K562 (cell line): ENCODE measurements at regions of chr4 and their contacts with region 1.

Region 1: GRCh38 chr4:121823505-121824170 is at the start of gene CCNA2:
- DNase-seq: peak; percentile 93 to 99 (median 94)
- ATAC-seq: peak; percentile 93
- H3K4me3 ChIP-seq: peak within 1 kb of the TSS; percentile 99
- H3K27ac ChIP-seq: peak within 1 kb of the TSS; percentile 96
- H3K4me1 ChIP-seq: peaks cover 0 to 20% of the 10 kb centered on the region in 2 experiments; a peak in 4 of 5 replicates
- H3K27me3 ChIP-seq: no peaks in the 10 kb centered on the region
- CTCF ChIP-seq: peak in 1 of 3 experiments; percentile 16; a peak in 1 of 6 replicates
- EP300 ChIP-seq: peak; percentile 50; the same call in 1 of the 2 replicates
- POLR2A ChIP-seq: peak; percentile 95
- RAD21 ChIP-seq: no peak
- polyA plus RNA-seq, gene CCNA2: 37.1 to 47.8 TPM

Region 2: GRCh38 chr4:121800961-121801714 is 22.5 kb before region 1 on chr4 and contains the start of gene EXOSC9:
- CTCF ChIA-PET with region 1: no interaction called
- POLR2A ChIA-PET with region 1: interaction called, 7 read pairs
- in situ Hi-C with region 1: no loop called
- intact Hi-C with region 1: loop called (anchors 2 kb)
- DNase-seq: peak; percentile 88 to 97 (median 90)
- ATAC-seq: peak; percentile 85
- H3K4me3 ChIP-seq: peak within 1 kb of the TSS; percentile 94
- H3K27ac ChIP-seq: peak within 1 kb of the TSS; percentile 97
- H3K4me1 ChIP-seq: peaks cover 3 to 8% of the 10 kb centered on the region in 2 experiments; a peak in 1 of 5 replicates
- H3K27me3 ChIP-seq: no peaks in the 10 kb centered on the region
- CTCF ChIP-seq: no peak
- EP300 ChIP-seq: no peak
- POLR2A ChIP-seq: peak; percentile 96
- RAD21 ChIP-seq: peak in 1 of 2 experiments; percentile 17; a peak in 1 of 4 replicates
- polyA plus RNA-seq, gene EXOSC9: 157 to 166 TPM

Region 3: DNA sequence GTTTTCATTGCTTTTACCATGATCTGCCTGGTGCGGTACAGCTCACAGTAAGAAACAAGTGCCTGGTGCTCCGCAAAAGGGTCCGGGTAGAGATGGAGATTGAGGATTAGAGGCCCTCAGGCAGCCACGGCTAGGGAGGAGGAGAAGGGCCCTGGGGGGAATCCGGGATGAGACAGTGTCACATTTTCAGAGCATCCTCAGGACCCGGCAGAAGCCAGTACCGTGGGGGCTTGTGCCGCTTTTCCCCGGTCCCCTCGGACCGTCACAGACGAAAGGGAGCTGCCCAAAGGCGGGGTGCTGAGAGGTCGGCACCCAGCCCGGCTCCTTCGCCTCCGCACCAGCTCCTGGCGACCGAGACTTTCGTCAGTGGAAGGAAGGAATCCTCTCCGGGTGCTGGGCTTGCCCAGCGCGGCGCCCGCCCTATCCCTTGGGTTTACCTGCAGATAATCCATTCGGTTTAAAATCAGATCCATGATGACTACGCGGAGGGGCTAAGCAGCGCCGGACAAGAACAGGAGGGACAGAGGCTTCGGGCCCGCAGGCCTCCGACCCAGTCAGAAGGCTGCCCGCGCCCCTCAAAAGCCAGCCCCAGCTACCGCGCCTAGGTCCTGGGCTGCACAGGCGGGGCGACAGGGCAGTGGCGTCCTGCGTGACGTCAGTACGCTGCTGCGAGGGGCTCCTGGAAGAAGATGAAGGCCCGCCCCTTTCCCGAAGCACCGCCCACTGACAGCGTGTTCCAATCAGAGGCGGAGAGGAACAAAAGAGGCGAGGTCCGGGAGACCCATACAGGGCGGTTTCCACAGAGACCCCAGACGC is 46.4 kb after region 1 on chr4 and contains the start of gene BBS7:
- CTCF ChIA-PET with region 1: no interaction called
- POLR2A ChIA-PET with region 1: interaction called, 4 read pairs
- in situ Hi-C with region 1: no loop called
- intact Hi-C with region 1: loop called (anchors 5 kb)
- DNase-seq: peak; percentile 94 to 98 (median 95)
- ATAC-seq: peak; percentile 98
- H3K4me3 ChIP-seq: peak within 1 kb of the TSS; percentile 84
- H3K27ac ChIP-seq: peak within 1 kb of the TSS; percentile 63; the same call in 2 of the 3 replicates
- H3K4me1 ChIP-seq: peaks cover 7 to 11% of the 10 kb centered on the region in 2 experiments; a peak in 4 of 5 replicates
- H3K27me3 ChIP-seq: no peaks in the 10 kb centered on the region
- CTCF ChIP-seq: no peak
- EP300 ChIP-seq: no peak
- POLR2A ChIP-seq: peak; percentile 81
- RAD21 ChIP-seq: no peak
- polyA plus RNA-seq, gene BBS7: 17.2 to 19.0 TPM